ENCODE measurements at regions of chr1 and their contacts with region 1.

Region 1: DNA sequence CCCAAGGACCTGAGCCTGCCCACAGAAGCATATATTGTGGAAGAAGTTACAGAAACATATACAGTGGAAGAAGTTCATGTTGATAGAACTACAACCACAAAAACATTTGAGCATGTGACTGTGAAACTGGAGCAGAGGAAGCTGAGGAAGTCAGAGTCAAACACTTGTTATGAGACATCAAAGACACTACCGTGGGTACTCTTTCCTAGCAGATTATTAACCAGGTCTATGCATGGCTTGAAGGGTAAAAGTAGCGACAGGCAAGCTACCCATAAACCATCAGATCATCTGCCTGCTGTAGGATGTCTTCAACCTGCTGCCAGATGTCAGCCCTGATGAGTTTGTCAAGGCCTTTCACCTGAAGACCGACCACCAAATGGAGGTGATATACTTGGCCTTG is 35.8 kb downstream of the IVNS1ABP start:
- DNase-seq: peak in 7 of 9 experiments; percentile 12 to 72 (median 36)
- ATAC-seq: peak; percentile 92
- H3K4me3 ChIP-seq: no peak overlapping the region
- H3K4me3 Mint-ChIP-seq: peak overlapping the region; percentile 72
- H3K27ac ChIP-seq: peak overlapping the region; percentile 7 to 63
- H3K27ac Mint-ChIP-seq: peak overlapping the region; percentile 96
- H3K4me1 ChIP-seq: peaks cover 47% of the 10 kb centered on the region
- H3K4me1 Mint-ChIP-seq: peaks cover 64% of the 10 kb centered on the region
- H3K27me3 ChIP-seq: no peaks in the 10 kb centered on the region
- H3K27me3 Mint-ChIP-seq: no peaks in the 10 kb centered on the region
- CTCF ChIP-seq: no peak

Region 2: DNA sequence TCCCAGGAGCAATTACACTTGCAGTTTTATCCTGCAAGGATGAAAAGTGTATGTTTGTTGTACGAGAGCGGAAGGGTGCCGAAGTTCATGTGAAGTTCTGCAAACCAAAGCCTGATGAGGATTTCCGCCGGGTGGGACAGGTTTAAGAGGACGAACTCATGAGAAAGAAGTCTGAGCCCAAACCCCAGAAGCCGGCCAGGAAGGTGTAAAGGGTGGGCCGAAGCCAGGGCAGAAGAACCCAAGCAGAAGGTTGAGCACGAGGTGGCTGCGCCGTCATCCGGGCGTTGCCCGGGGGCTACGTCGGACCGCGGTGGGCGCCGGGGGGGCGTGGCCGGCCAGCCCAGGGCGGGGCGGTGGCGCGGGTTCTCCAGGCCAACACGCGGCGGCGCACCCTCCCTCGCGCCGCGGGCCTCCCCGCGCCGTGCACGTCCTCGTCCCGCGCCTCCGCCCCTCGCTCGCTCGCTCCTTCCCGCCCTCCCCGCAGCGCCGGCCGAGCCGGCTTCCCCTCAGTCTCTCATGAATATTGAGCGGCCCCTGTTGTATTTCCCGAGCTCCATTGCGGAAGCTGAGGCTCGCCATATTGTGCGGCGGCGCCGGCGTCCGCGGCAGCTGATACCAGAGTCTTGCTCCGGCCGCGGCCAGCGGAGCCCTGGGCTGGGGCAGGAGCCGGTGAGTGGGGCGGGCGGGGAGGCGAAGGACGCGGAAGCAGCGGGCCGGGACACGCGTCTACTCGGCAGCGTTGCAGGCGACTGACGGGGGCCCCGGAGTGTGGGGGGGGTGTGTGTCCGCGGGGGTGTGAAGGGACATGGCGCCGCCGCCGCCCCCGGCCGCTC is 236.0 kb before region 1 on chr1 and contains the start of gene RNF2:
- CTCF ChIA-PET with region 1: no interaction called
- POLR2A ChIA-PET with region 1: no interaction called
- intact Hi-C with region 1: no loop called
- DNase-seq: peak; percentile 61 to 95 (median 84)
- ATAC-seq: peak; percentile 91
- H3K4me3 ChIP-seq: peak within 1 kb of the TSS; percentile 74 to 85
- H3K4me3 Mint-ChIP-seq: peak within 1 kb of the TSS; percentile 92
- H3K27ac ChIP-seq: peak within 1 kb of the TSS; percentile 62 to 81
- H3K27ac Mint-ChIP-seq: peak within 1 kb of the TSS; percentile 93
- H3K4me1 ChIP-seq: peaks cover 23% of the 10 kb centered on the region
- H3K4me1 Mint-ChIP-seq: peaks cover 46% of the 10 kb centered on the region
- H3K27me3 ChIP-seq: no peaks in the 10 kb centered on the region
- H3K27me3 Mint-ChIP-seq: no peaks in the 10 kb centered on the region
- CTCF ChIP-seq: no peak
- total RNA-seq, gene RNF2: 13.3 to 13.6 TPM

Region 3: GRCh38 chr1:185257947-185258203 is 23.4 kb before region 1 on chr1:
- CTCF ChIA-PET with region 1: no interaction called
- POLR2A ChIA-PET with region 1: interaction called, 7 read pairs
- intact Hi-C with region 1: loop called in 1 of 2 experiments (anchors 2 kb)
- DNase-seq: no peak
- ATAC-seq: no peak
- H3K4me3 ChIP-seq: no peak overlapping the region
- H3K4me3 Mint-ChIP-seq: no peak overlapping the region
- H3K27ac ChIP-seq: no peak overlapping the region
- H3K27ac Mint-ChIP-seq: no peak overlapping the region
- H3K4me1 ChIP-seq: no peaks in the 10 kb centered on the region
- H3K4me1 Mint-ChIP-seq: peaks cover 19% of the 10 kb centered on the region
- H3K27me3 ChIP-seq: no peaks in the 10 kb centered on the region
- H3K27me3 Mint-ChIP-seq: no peaks in the 10 kb centered on the region
- CTCF ChIP-seq: no peak

Region 4: GRCh38 chr1:185291652-185292051 is 10.4 kb after region 1 on chr1:
- CTCF ChIA-PET with region 1: interaction called, 4 read pairs
- POLR2A ChIA-PET with region 1: interaction called, 24 read pairs
- intact Hi-C with region 1: loop called in 1 of 2 experiments (anchors 1 kb)
- DNase-seq: no peak
- ATAC-seq: no peak
- H3K4me3 ChIP-seq: no peak overlapping the region
- H3K4me3 Mint-ChIP-seq: no peak overlapping the region
- H3K27ac ChIP-seq: no peak overlapping the region
- H3K27ac Mint-ChIP-seq: peak overlapping the region; percentile 45
- H3K4me1 ChIP-seq: no peaks in the 10 kb centered on the region
- H3K4me1 Mint-ChIP-seq: peaks cover 31% of the 10 kb centered on the region
- H3K27me3 ChIP-seq: no peaks in the 10 kb centered on the region
- H3K27me3 Mint-ChIP-seq: no peaks in the 10 kb centered on the region
- CTCF ChIP-seq: no peak

Region 5: DNA sequence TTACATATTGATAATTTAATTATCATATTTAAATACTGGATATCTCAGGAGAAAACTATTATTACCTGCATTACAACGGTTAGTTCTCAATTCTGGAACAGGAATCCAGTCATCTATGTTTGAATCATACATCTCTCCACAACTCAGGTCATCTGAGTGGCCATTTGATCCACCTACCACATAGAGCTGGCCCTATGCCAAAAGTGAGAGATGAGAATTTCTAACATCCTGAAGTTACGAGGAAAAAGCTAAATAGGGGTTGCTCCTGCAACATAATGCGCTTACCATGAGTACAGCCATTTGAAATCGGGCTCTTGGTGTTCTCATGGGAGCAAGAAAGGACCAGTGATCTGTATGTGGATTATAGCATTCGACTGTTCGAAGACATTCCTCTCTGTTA is 18.9 kb after region 1 on chr1:
- CTCF ChIA-PET with region 1: interaction called, 5 read pairs
- POLR2A ChIA-PET with region 1: interaction called, 15 read pairs
- intact Hi-C with region 1: no loop called
- DNase-seq: no peak
- ATAC-seq: no peak
- H3K4me3 ChIP-seq: no peak overlapping the region
- H3K4me3 Mint-ChIP-seq: no peak overlapping the region
- H3K27ac ChIP-seq: no peak overlapping the region
- H3K27ac Mint-ChIP-seq: no peak overlapping the region
- H3K4me1 ChIP-seq: no peaks in the 10 kb centered on the region
- H3K4me1 Mint-ChIP-seq: peaks cover 3% of the 10 kb centered on the region
- H3K27me3 ChIP-seq: no peaks in the 10 kb centered on the region
- H3K27me3 Mint-ChIP-seq: no peaks in the 10 kb centered on the region
- CTCF ChIP-seq: no peak

Measured in CD8-positive, alpha-beta T cell (primary cell).